ENCODE measurements at regions of chr2 and their contacts with region 1.

Region 1: DNA sequence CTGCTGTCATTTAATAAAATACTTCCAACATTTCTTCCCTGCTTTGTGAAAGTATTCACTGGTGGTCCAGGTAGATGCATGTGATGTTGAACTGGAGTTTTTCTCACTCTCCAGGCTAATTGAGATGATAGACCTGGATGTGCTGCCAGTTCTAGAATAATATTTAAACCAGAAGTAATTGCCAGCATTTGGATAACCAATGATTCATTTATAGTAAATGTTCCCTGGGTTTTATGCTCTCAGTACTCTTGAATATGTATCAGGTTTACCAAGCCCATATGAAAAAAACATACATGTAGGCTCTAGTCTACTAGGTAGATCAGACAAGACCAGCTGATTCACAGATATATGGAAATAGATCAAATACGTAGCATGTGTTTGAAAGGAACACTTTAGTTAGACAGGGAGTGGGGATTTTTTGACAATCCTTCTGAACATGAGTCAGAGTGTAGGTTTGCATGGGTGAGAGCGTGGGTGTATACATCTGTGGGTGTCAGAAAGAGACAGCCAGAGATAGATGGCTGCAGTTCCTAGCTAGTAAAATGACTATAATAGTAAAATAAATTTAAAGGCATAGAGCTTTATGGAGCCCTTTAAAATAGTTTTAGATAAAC is 115.1 kb downstream of the NAB1 start:
- DNase-seq: peak in 1 of 9 donors; percentile 52
- ATAC-seq: peak; percentile 38
- H3K4me3 ChIP-seq: no peak overlapping the region
- H3K4me3 Mint-ChIP-seq: no peak overlapping the region
- H3K27ac ChIP-seq: no peak overlapping the region
- H3K27ac Mint-ChIP-seq: no peak overlapping the region
- H3K4me1 ChIP-seq: no peaks in the 10 kb centered on the region
- H3K4me1 Mint-ChIP-seq: peaks cover 2 to 18% (median 8%) of the 10 kb centered on the region in 7 donors
- H3K27me3 ChIP-seq: no peaks in the 10 kb centered on the region
- H3K27me3 Mint-ChIP-seq: peaks cover 0 to 8% (median 0%) of the 10 kb centered on the region in 5 donors

Region 2: GRCh38 chr2:190722061-190722759 is 41.8 kb before region 1 on chr2:
- CTCF ChIA-PET with region 1: no interaction called
- POLR2A ChIA-PET with region 1: no interaction called
- intact Hi-C with region 1: loop called in 1 of 2 experiments (anchors 2 kb)
- DNase-seq: no peak
- ATAC-seq: peak; percentile 29
- H3K4me3 ChIP-seq: no peak overlapping the region
- H3K4me3 Mint-ChIP-seq: peak overlapping the region in 1 of 10 donors; percentile 3
- H3K27ac ChIP-seq: no peak overlapping the region
- H3K27ac Mint-ChIP-seq: peak overlapping the region in 2 of 9 donors; percentile 9 to 26
- H3K4me1 ChIP-seq: peaks cover 0 to 8% of the 10 kb centered on the region in 2 donors
- H3K4me1 Mint-ChIP-seq: peaks cover 0 to 31% (median 16%) of the 10 kb centered on the region in 7 donors
- H3K27me3 ChIP-seq: no peaks in the 10 kb centered on the region
- H3K27me3 Mint-ChIP-seq: no peaks in the 10 kb centered on the region

Region 3: DNA sequence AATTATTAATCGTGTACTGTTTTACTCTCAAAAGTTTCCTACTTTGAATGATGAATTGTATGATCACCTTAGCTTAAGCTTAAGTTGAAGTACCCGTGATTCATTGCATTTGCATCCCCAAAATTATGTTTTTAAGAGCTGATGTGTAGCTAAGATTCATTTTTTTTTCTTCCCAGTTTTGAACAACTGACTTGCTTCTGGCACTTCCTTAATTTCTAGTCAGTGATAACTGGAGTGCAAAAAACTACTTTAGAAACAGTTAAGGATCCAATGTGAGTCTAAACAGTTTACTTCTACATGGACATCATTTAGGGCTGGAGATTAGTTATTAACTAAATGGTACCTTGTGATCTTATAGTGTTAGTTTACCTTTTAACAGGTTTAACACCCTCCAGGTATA is 1206.9 kb after region 1 on chr2:
- CTCF ChIA-PET with region 1: no interaction called
- POLR2A ChIA-PET with region 1: no interaction called
- intact Hi-C with region 1: no loop called
- DNase-seq: no peak
- ATAC-seq: no peak
- H3K4me3 ChIP-seq: no peak overlapping the region
- H3K4me3 Mint-ChIP-seq: no peak overlapping the region
- H3K27ac ChIP-seq: no peak overlapping the region
- H3K27ac Mint-ChIP-seq: no peak overlapping the region
- H3K4me1 ChIP-seq: no peaks in the 10 kb centered on the region
- H3K4me1 Mint-ChIP-seq: no peaks in the 10 kb centered on the region
- H3K27me3 ChIP-seq: no peaks in the 10 kb centered on the region
- H3K27me3 Mint-ChIP-seq: peaks cover 3 to 17% (median 12%) of the 10 kb centered on the region in 5 donors

Measured in naive thymus-derived CD4-positive, alpha-beta T cell (primary cell).